ENCODE measurements at regions of chrX and their contacts with region 1.

Region 1: GRCh38 chrX:103464774-103465117 is 54.5 kb downstream of the RAB40A start:
- DNase-seq: peak; percentile 66
- H3K4me3 ChIP-seq: peak overlapping the region; percentile 32 to 38 (median 35)
- H3K27ac ChIP-seq: no peak overlapping the region
- H3K4me1 ChIP-seq: peaks cover 4% of the 10 kb centered on the region
- H3K27me3 ChIP-seq: no peaks in the 10 kb centered on the region
- CTCF ChIP-seq: peak; percentile 86 to 97

Region 2: GRCh38 chrX:103214870-103215424 is 249.8 kb before region 1 on chrX and contains the start of gene BEX4:
- CTCF ChIA-PET with region 1: no interaction called
- dilution Hi-C with region 1: no loop called
- in situ Hi-C with region 1: loop called (anchors 25 kb)
- intact Hi-C with region 1: loop called (anchors 1 kb)
- DNase-seq: peak; percentile 29
- H3K4me3 ChIP-seq: peak within 1 kb of the TSS; percentile 55 to 63 (median 56)
- H3K27ac ChIP-seq: peak within 1 kb of the TSS; percentile 11
- H3K4me1 ChIP-seq: no peaks in the 10 kb centered on the region
- H3K27me3 ChIP-seq: peaks cover 3% of the 10 kb centered on the region
- CTCF ChIP-seq: no peak
- total RNA-seq, gene BEX4: 9.8 to 14.2 TPM

Region 3: DNA sequence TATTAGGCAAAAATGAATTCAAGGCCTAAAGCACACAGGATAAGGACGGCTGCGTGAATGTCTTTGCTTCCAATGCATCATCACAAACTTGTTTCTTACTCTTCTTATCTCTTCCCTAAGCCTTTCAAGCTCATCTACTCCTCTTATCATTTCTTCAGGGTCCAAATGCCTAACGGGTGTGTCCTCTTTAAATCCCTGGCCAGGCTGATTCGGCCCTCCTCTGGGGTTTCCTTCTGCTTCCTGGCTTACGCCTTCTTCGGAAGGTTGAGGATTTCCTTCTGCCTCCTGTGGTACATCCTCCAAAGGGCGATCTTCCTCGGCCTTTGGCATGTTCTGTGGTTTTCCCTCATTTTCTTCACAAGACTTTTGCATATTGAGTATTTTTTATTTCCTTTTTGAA is 211.1 kb before region 1 on chrX:
- CTCF ChIA-PET with region 1: interaction called, 3 read pairs
- dilution Hi-C with region 1: no loop called
- in situ Hi-C with region 1: no loop called
- intact Hi-C with region 1: loop called (anchors 1 kb)
- DNase-seq: no peak
- H3K4me3 ChIP-seq: peak overlapping the region; percentile 48 to 64 (median 54)
- H3K27ac ChIP-seq: peak overlapping the region; percentile 67
- H3K4me1 ChIP-seq: peaks cover 8% of the 10 kb centered on the region
- H3K27me3 ChIP-seq: no peaks in the 10 kb centered on the region
- CTCF ChIP-seq: no peak

Region 4: DNA sequence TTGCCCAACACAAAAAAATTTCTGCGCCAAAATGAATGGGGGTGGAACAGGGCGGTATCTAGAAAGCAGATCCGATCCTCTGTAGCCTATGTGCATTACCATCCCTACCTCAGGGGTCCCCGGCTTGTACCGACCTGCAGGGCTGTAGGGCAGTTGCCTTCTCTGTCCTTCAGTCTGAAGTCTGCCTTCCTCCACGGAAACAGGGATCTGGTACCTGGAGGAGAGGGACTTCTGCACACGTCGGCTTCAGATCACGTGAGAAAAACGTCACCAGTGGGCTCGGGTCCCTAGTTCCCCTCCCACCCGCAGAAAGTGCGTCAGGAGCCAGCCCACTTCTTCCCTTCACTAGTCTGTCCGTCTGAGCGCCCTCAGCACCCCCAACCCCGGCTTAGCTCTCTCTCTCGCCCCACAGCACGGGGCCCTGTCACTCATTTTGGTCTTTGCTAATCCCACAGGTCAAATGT is 188.2 kb before region 1 on chrX and contains the start of gene TCEAL5:
- CTCF ChIA-PET with region 1: no interaction called
- dilution Hi-C with region 1: no loop called
- in situ Hi-C with region 1: no loop called
- intact Hi-C with region 1: no loop called
- DNase-seq: no peak
- H3K4me3 ChIP-seq: no peak within 1 kb of the TSS
- H3K27ac ChIP-seq: no peak within 1 kb of the TSS
- H3K4me1 ChIP-seq: no peaks in the 10 kb centered on the region
- H3K27me3 ChIP-seq: peaks cover 13% of the 10 kb centered on the region
- CTCF ChIP-seq: no peak
- total RNA-seq, gene TCEAL5: not detected

Region 5: DNA sequence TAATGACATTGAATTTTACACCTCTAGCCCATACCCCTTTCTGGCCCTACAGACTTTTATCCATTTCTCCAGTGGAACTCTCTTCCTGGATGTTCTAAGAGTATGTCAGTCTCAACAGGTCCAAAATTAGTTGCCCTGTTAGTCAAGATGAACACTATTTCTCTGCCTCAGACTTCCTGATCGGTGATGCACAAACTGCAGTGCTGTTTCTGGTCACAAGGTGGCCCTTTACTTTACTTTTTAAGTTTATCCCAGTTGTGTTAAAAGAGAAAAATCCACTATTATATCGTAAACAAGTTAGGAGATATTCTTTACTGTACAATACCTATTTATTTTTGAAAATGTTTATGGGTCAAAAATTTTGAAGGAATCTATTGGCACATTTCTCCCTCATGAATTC is 121.6 kb before region 1 on chrX:
- CTCF ChIA-PET with region 1: interaction called, 5 read pairs
- dilution Hi-C with region 1: no loop called
- in situ Hi-C with region 1: loop called in 1 of 2 experiments (anchors 10 kb)
- intact Hi-C with region 1: loop called (anchors 1 kb)
- DNase-seq: peak; percentile 28
- H3K4me3 ChIP-seq: no peak overlapping the region
- H3K27ac ChIP-seq: no peak overlapping the region
- H3K4me1 ChIP-seq: no peaks in the 10 kb centered on the region
- H3K27me3 ChIP-seq: no peaks in the 10 kb centered on the region
- CTCF ChIP-seq: peak; percentile 74 to 83

Region 6: GRCh38 chrX:103356130-103356798 is 108.5 kb before region 1 on chrX and contains the start of gene TCEAL9:
- CTCF ChIA-PET with region 1: no interaction called
- dilution Hi-C with region 1: no loop called
- in situ Hi-C with region 1: loop called in 1 of 2 experiments (anchors 10 kb)
- intact Hi-C with region 1: loop called (anchors 5 kb)
- DNase-seq: peak; percentile 46
- H3K4me3 ChIP-seq: peak within 1 kb of the TSS; percentile 50 to 64 (median 60)
- H3K27ac ChIP-seq: peak within 1 kb of the TSS; percentile 80
- H3K4me1 ChIP-seq: no peaks in the 10 kb centered on the region
- H3K27me3 ChIP-seq: no peaks in the 10 kb centered on the region
- CTCF ChIP-seq: no peak
- total RNA-seq, gene TCEAL9: 44.5 to 71.1 TPM

Region 7: GRCh38 chrX:103376118-103376978 is 88.4 kb before region 1 on chrX and contains the start of gene BEX3:
- CTCF ChIA-PET with region 1: no interaction called
- dilution Hi-C with region 1: no loop called
- in situ Hi-C with region 1: no loop called
- intact Hi-C with region 1: loop called (anchors 1 kb)
- DNase-seq: no peak
- H3K4me3 ChIP-seq: peak within 1 kb of the TSS; percentile 60 to 69 (median 66)
- H3K27ac ChIP-seq: peak within 1 kb of the TSS; percentile 55
- H3K4me1 ChIP-seq: peaks cover 7% of the 10 kb centered on the region
- H3K27me3 ChIP-seq: no peaks in the 10 kb centered on the region
- CTCF ChIP-seq: no peak
- total RNA-seq, gene BEX3: 93.4 to 146 TPM

Region 8: DNA sequence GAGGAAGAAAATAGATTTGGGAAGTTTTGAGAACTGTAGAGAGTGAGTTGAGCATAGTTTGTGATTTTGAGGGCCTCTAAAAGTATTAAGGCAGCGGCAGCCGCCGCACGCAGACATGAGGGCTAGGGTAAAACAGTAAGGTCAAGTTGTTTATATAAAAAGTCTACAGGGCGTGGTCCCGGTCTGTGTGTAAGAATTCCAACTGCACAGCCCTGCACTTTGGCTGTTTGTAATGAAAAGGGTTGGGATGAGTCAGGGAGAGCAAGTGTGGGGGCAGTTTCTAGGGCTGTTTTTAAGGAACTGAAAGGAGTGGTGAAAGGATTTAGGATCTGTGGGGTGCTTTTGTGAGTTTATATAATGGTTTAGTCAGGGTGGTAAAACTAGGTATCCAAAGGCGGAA is 33.4 kb before region 1 on chrX:
- CTCF ChIA-PET with region 1: no interaction called
- dilution Hi-C with region 1: no loop called
- in situ Hi-C with region 1: no loop called
- intact Hi-C with region 1: no loop called
- DNase-seq: peak; percentile 28
- H3K4me3 ChIP-seq: no peak overlapping the region
- H3K27ac ChIP-seq: no peak overlapping the region
- H3K4me1 ChIP-seq: no peaks in the 10 kb centered on the region
- H3K27me3 ChIP-seq: no peaks in the 10 kb centered on the region
- CTCF ChIP-seq: no peak

Region 9: DNA sequence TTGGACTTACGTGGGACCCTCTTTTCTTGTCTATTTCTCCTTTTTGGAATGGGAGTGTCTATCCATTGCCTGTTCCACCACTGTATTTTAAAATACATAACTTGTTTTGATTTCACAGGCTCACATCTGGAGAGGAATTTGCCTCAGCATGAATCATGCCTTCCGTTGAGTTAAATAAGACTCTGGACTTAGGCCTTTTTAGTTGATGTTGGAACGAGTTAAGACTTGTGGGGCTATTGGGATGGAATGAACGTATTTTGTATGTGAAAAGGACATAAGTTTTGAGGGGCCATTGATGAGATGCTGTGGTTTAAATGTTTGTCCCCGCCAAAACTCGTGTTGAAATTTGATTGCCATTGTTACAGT is 22.2 kb before region 1 on chrX:
- CTCF ChIA-PET with region 1: no interaction called
- dilution Hi-C with region 1: no loop called
- in situ Hi-C with region 1: no loop called
- intact Hi-C with region 1: loop called (anchors 1 kb)
- DNase-seq: peak; percentile 82
- H3K4me3 ChIP-seq: peak overlapping the region in 1 of 3 experiments; percentile 3
- H3K27ac ChIP-seq: peak overlapping the region; percentile 93
- H3K4me1 ChIP-seq: peaks cover 28% of the 10 kb centered on the region
- H3K27me3 ChIP-seq: no peaks in the 10 kb centered on the region
- CTCF ChIP-seq: no peak

Measured in mammary epithelial cell (primary cell).